ENCODE measurements at regions of chr2 and their contacts with region 1.

Region 1: GRCh38 chr2:166057370-166058164 is 70.3 kb downstream of the SCN1A start:
- DNase-seq: no peak
- ATAC-seq: no peak

Region 2: GRCh38 chr2:165863810-165864261 is 193.7 kb before region 1 on chr2:
- intact Hi-C with region 1: no loop called
- DNase-seq: no peak
- ATAC-seq: no peak

Region 3: GRCh38 chr2:166170356-166170755 is 112.8 kb after region 1 on chr2:
- intact Hi-C with region 1: loop called (anchors 5 kb)
- DNase-seq: no peak
- ATAC-seq: no peak

Measured in left ventricle myocardium superior (tissue), 1 donor.